CD4-positive, alpha-beta T cell (primary cell): ENCODE measurements at regions of chr18 and their contacts with region 1.

Region 1: DNA sequence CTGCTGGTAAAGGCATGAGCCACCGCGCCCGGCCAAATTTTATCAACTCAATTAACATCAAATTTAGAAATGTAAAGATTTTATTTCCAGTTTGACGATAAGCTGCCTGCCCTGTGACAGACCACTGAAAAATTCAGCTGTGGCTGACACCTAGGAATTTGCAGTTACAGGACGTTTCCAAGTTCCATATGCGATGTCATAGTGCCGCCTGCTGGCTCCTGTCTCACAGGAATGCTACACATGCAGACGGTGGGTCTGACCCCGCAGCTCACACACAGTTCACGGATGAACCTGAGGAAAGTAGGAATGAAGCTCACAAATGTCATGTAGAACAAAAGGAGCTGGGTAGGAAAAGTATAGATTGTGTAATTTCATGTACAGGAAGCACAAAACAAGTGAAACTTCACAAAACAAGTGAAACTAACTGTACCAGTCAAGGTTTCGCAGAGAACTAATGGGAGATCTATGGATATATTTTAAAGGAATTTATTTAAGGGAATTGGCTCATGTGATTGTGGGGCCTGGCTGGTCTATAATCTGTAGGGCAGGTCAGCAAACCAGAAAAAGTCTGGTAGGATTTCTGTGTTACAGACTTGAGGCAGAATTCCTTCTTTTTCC is 13.2 kb upstream of the SEH1L start:
- DNase-seq: peak; percentile 61 to 88 (median 74)
- ATAC-seq: peak; percentile 92
- H3K4me3 ChIP-seq: no peak overlapping the region
- H3K4me3 Mint-ChIP-seq: no peak overlapping the region
- H3K27ac ChIP-seq: no peak overlapping the region
- H3K27ac Mint-ChIP-seq: no peak overlapping the region
- H3K4me1 ChIP-seq: peaks cover 4% of the 10 kb centered on the region
- H3K4me1 Mint-ChIP-seq: no peaks in the 10 kb centered on the region
- H3K27me3 ChIP-seq: no peaks in the 10 kb centered on the region
- H3K27me3 Mint-ChIP-seq: peaks cover 3% of the 10 kb centered on the region
- CTCF ChIP-seq: peak; percentile 94

Region 2: DNA sequence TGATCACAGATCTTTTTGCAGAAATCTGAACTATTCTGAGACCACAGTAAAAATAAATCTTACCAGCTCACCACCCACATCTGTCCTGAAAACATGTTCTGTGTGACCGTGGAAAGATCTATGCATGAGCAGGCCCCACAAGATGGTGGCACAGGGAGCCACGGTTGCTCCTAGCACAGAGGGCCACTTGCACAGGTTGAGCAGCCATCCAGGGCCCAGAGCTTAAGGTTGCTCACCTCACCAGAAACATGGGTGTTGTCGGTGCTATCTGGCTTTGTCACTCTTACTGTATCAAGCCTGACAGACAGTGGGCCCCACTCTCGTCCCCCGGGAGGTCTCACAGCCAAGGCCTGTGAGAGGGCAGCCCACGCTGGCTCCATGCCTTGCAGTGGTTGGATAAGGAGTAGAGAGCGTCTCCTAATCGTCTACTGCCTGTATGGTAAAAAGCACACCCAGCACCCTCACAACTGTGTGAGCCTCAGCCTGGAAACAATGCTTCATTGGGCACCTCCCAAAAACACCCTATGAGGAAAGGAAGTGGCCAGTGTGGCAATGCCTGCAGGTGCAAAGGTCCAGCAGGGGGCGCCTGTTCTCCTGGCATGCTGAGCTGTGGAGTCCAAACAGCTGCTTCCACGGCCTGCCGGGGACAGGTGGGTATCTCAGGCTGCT is 606.9 kb before region 1 on chr18:
- CTCF ChIA-PET with region 1: no interaction called
- POLR2A ChIA-PET with region 1: no interaction called
- intact Hi-C with region 1: loop called in 1 of 2 experiments (anchors 5 kb)
- DNase-seq: peak; percentile 56 to 78 (median 64)
- ATAC-seq: peak; percentile 56
- H3K4me3 ChIP-seq: no peak overlapping the region
- H3K4me3 Mint-ChIP-seq: no peak overlapping the region
- H3K27ac ChIP-seq: no peak overlapping the region
- H3K27ac Mint-ChIP-seq: no peak overlapping the region
- H3K4me1 ChIP-seq: peaks cover 4% of the 10 kb centered on the region
- H3K4me1 Mint-ChIP-seq: no peaks in the 10 kb centered on the region
- H3K27me3 ChIP-seq: no peaks in the 10 kb centered on the region
- H3K27me3 Mint-ChIP-seq: no peaks in the 10 kb centered on the region
- CTCF ChIP-seq: peak; percentile 68

Region 3: GRCh38 chr18:12391618-12392165 is 542.9 kb before region 1 on chr18:
- CTCF ChIA-PET with region 1: interaction called, 8 read pairs
- POLR2A ChIA-PET with region 1: no interaction called
- intact Hi-C with region 1: loop called (anchors 1 to 2 kb)
- DNase-seq: peak; percentile 22 to 75 (median 35)
- ATAC-seq: peak; percentile 99
- H3K4me3 ChIP-seq: no peak overlapping the region
- H3K4me3 Mint-ChIP-seq: no peak overlapping the region
- H3K27ac ChIP-seq: no peak overlapping the region
- H3K27ac Mint-ChIP-seq: no peak overlapping the region
- H3K4me1 ChIP-seq: no peaks in the 10 kb centered on the region
- H3K4me1 Mint-ChIP-seq: no peaks in the 10 kb centered on the region
- H3K27me3 ChIP-seq: peaks cover 0 to 3% of the 10 kb centered on the region in 2 experiments
- H3K27me3 Mint-ChIP-seq: peaks cover 12% of the 10 kb centered on the region
- CTCF ChIP-seq: peak; percentile 82

Region 4: GRCh38 chr18:12721495-12722275 is 212.9 kb before region 1 on chr18:
- CTCF ChIA-PET with region 1: interaction called, 61 read pairs
- POLR2A ChIA-PET with region 1: interaction called, 7 read pairs
- intact Hi-C with region 1: no loop called
- DNase-seq: no peak
- ATAC-seq: no peak
- H3K4me3 ChIP-seq: no peak overlapping the region
- H3K4me3 Mint-ChIP-seq: no peak overlapping the region
- H3K27ac ChIP-seq: peak overlapping the region in 1 of 2 donors; percentile 14
- H3K27ac Mint-ChIP-seq: peak overlapping the region; percentile 24
- H3K4me1 ChIP-seq: no peaks in the 10 kb centered on the region
- H3K4me1 Mint-ChIP-seq: peaks cover 6% of the 10 kb centered on the region
- H3K27me3 ChIP-seq: no peaks in the 10 kb centered on the region
- H3K27me3 Mint-ChIP-seq: no peaks in the 10 kb centered on the region
- CTCF ChIP-seq: no peak

Region 5: GRCh38 chr18:12726774-12727550 is 207.6 kb before region 1 on chr18:
- CTCF ChIA-PET with region 1: interaction called, 61 read pairs
- POLR2A ChIA-PET with region 1: interaction called, 7 read pairs
- intact Hi-C with region 1: loop called (anchors 1 kb)
- DNase-seq: peak in 13 of 14 experiments; percentile 7 to 82 (median 44)
- ATAC-seq: peak; percentile 67
- H3K4me3 ChIP-seq: no peak overlapping the region
- H3K4me3 Mint-ChIP-seq: no peak overlapping the region
- H3K27ac ChIP-seq: no peak overlapping the region
- H3K27ac Mint-ChIP-seq: no peak overlapping the region
- H3K4me1 ChIP-seq: no peaks in the 10 kb centered on the region
- H3K4me1 Mint-ChIP-seq: peaks cover 2% of the 10 kb centered on the region
- H3K27me3 ChIP-seq: no peaks in the 10 kb centered on the region
- H3K27me3 Mint-ChIP-seq: no peaks in the 10 kb centered on the region
- CTCF ChIP-seq: peak; percentile 98

Region 6: GRCh38 chr18:12744103-12744502 is 190.5 kb before region 1 on chr18:
- CTCF ChIA-PET with region 1: interaction called, 12 read pairs
- POLR2A ChIA-PET with region 1: interaction called, 7 read pairs
- intact Hi-C with region 1: loop called (anchors 1 kb)
- DNase-seq: peak in 3 of 14 experiments; percentile 59 to 65 (median 63)
- ATAC-seq: peak; percentile 51
- H3K4me3 ChIP-seq: no peak overlapping the region
- H3K4me3 Mint-ChIP-seq: no peak overlapping the region
- H3K27ac ChIP-seq: no peak overlapping the region
- H3K27ac Mint-ChIP-seq: no peak overlapping the region
- H3K4me1 ChIP-seq: no peaks in the 10 kb centered on the region
- H3K4me1 Mint-ChIP-seq: peaks cover 2% of the 10 kb centered on the region
- H3K27me3 ChIP-seq: no peaks in the 10 kb centered on the region
- H3K27me3 Mint-ChIP-seq: no peaks in the 10 kb centered on the region
- CTCF ChIP-seq: peak; percentile 54

Region 7: GRCh38 chr18:12947355-12948041 is 12.9 kb after region 1 on chr18 and contains the start of gene SEH1L:
- CTCF ChIA-PET with region 1: interaction called, 14 read pairs
- POLR2A ChIA-PET with region 1: interaction called, 6 read pairs
- intact Hi-C with region 1: no loop called
- DNase-seq: peak; percentile 96 to 100 (median 99)
- ATAC-seq: peak; percentile 80
- H3K4me3 ChIP-seq: peak within 1 kb of the TSS; percentile 69
- H3K4me3 Mint-ChIP-seq: peak within 1 kb of the TSS; percentile 92
- H3K27ac ChIP-seq: peak within 1 kb of the TSS; percentile 93 to 96
- H3K27ac Mint-ChIP-seq: peak within 1 kb of the TSS; percentile 96
- H3K4me1 ChIP-seq: peaks cover 38% of the 10 kb centered on the region
- H3K4me1 Mint-ChIP-seq: peaks cover 38% of the 10 kb centered on the region
- H3K27me3 ChIP-seq: no peaks in the 10 kb centered on the region
- H3K27me3 Mint-ChIP-seq: no peaks in the 10 kb centered on the region
- CTCF ChIP-seq: no peak
- total RNA-seq, gene SEH1L: 23.9 to 26.7 TPM